ENCODE measurements at regions of chr15 and their contacts with region 1.

Region 1: GRCh38 chr15:57306161-57306943 is 70.0 kb upstream of the CGNL1 start:
- DNase-seq: peak; percentile 71 to 97 (median 90)

Region 2: GRCh38 chr15:57146506-57147201 is 159.7 kb before region 1 on chr15:
- intact Hi-C with region 1: loop called (anchors 2 kb)
- DNase-seq: peak in 10 of 42 donors; percentile 31 to 77 (median 48)

Region 3: DNA sequence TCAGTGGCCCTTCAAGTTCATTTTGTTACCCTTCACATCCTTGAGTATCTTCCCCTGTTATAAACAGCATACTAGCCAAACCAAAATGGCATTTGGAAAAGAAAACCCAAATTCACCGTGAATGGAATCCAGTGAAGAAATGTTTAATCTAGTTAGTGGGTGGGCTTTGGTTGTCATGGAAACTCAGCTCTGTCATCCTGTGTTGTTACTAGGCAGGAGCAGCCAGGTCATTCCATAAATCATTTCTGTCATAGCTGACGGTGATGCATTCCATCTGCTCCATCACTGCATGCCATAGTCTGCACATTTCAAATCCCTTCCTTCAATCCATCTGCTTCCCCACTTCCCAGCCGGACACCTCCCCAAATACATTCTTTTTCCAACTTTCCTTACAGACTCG is 70.5 kb before region 1 on chr15:
- intact Hi-C with region 1: loop called (anchors 10 kb)
- DNase-seq: no peak